AG04449 (cell line): ENCODE measurements at regions of chr14 and their contacts with region 1.

Region 1: GRCh38 chr14:67589204-67589770 is 10.8 kb downstream of the PIGH start:
- DNase-seq: no peak
- H3K4me3 ChIP-seq: no peak overlapping the region
- CTCF ChIP-seq: no peak

Region 2: GRCh38 chr14:67599698-67600561 is 10.6 kb after region 1 on chr14 and contains the start of gene PIGH:
- CTCF ChIA-PET with region 1: interaction called, 41 read pairs
- POLR2A ChIA-PET with region 1: interaction called, 3 read pairs
- DNase-seq: no peak
- H3K4me3 ChIP-seq: peak within 1 kb of the TSS; percentile 86
- CTCF ChIP-seq: peak; percentile 69